WTC11 (cell line): ENCODE measurements at regions of chr11 and their contacts with region 1.

Region 1: DNA sequence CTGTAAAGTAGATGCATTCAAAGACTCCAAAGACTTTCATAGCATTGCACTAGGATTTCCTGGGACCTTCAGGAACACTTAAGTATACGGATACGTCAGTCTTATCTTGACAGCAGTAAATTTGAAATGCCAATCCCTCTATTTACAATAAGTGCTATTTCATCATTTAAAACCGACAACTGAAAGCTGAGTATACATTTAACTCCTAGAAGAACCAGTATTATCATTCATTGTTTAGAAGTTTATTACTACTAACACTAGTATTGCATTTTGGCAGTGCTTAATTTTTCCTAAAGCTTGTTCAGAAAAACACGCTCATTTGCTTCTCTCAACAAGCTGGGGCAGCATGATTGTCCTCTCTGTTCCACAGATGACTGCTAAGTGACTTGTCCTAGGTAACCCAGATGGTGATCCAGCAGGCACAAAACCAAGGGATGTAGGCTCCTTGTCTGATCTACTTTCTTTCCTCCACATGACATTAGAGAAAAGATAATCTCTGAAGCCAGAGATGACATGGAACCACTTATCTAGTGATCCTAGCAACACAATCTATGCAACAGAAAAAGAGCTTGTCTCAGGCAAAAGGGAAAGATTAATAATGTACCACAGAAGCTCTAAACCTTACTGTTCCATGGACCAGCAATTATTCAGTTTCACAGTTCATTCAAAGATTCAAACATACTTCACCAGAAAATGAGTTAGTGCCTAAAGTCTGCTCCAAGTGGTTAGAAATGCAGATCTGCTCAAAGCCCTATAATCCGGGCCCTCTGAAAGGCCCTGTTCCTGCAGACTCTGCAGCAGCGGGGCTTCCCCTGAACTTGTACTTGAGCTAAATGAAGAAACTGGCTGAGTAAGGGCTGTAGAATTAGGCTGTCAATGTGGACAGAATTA is 5.2 kb downstream of the MAML2 start:
- DNase-seq: no peak
- ATAC-seq: no peak
- H3K4me3 Mint-ChIP-seq: no peak overlapping the region
- H3K27ac Mint-ChIP-seq: peak overlapping the region; percentile 56
- H3K4me1 Mint-ChIP-seq: peaks cover 92% of the 10 kb centered on the region
- H3K27me3 Mint-ChIP-seq: no peaks in the 10 kb centered on the region
- CTCF ChIP-seq: no peak

Region 2: DNA sequence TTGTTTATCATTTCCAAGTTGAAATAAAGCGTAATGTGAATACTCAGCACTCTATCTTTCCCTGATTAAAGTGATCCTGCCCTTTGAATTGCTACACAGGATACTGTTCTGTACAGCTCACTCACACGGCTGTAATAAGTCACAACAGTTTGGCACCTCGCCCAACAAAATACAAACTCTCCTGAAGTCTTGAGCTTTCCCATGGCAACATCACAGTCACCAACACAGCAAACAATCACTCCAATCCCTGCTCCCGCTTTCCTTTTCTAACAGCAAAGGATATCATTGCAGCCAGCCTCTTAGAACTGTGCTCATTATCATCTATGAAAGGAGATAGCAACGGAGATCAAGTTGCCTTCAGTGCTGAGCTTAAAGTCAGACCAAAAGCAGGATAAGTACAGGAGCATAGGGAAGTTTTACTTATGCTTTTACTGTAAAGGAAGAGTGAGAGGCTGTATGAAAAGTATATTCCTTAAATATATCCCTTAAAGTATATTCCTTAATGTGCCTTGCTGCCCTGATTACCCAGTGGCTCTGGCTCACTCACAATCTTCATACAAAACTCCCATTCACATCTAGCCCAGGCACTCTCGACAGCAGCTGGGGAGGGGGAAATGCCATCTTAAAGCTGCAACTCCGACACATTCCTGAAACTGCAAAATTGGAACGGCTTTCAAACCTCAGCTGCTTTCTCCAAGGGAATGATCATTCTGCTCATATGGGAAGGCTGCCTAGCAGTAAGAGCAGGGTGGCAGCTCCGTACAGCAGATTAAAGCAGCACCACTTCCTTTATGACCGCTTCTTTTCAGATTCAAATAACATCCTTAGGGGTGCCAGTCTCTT is 30.6 kb before region 1 on chr11:
- CTCF ChIA-PET with region 1: interaction called, 33 read pairs
- POLR2A ChIA-PET with region 1: interaction called, 12 read pairs
- DNase-seq: no peak
- ATAC-seq: peak; percentile 72
- H3K4me3 Mint-ChIP-seq: peak overlapping the region; percentile 44
- H3K27ac Mint-ChIP-seq: peak overlapping the region; percentile 38
- H3K4me1 Mint-ChIP-seq: peaks cover 36% of the 10 kb centered on the region
- H3K27me3 Mint-ChIP-seq: no peaks in the 10 kb centered on the region
- CTCF ChIP-seq: no peak